Activated B cell treated with CpG ODN at 0.5 μM for 24 hours (primary cell): ENCODE measurements at regions of chr13 and their contacts with region 1.

Region 1: DNA sequence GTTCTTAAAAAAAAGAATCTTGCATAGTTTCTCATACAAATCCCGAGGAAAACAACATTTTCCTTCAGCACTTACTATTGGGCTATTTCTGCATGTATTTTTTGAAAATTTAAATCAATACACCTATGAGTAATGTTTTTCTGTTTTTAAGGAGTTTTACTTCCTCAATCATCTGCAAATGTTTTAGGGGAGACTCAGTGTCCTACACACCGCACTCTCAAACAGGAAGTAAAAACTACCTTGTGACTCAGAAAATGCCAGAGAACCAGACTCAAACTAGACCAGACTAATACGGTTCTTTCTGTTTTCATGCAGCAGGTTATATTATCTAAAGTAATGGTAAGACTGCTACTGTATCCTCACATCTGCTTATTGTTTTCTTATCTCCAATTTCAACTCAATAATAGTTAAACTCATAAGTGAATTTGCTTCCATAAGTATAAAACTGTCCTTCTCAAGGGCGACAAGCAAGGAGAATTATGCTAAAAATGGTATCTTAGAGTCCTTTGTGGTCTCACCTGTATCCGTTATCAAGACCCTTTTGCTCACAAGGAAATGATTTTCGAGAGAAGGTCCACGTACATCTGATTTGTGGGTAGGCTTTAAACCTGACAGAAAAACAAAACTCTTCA is 52.5 kb downstream of the FLT3 start:
- DNase-seq: no peak
- ATAC-seq: peak; percentile 92
- H3K4me3 Mint-ChIP-seq: peak overlapping the region; percentile 72
- H3K27ac Mint-ChIP-seq: peak overlapping the region; percentile 93
- H3K4me1 Mint-ChIP-seq: peaks cover 69% of the 10 kb centered on the region
- H3K27me3 Mint-ChIP-seq: no peaks in the 10 kb centered on the region
- CTCF ChIP-seq: no peak

Region 2: DNA sequence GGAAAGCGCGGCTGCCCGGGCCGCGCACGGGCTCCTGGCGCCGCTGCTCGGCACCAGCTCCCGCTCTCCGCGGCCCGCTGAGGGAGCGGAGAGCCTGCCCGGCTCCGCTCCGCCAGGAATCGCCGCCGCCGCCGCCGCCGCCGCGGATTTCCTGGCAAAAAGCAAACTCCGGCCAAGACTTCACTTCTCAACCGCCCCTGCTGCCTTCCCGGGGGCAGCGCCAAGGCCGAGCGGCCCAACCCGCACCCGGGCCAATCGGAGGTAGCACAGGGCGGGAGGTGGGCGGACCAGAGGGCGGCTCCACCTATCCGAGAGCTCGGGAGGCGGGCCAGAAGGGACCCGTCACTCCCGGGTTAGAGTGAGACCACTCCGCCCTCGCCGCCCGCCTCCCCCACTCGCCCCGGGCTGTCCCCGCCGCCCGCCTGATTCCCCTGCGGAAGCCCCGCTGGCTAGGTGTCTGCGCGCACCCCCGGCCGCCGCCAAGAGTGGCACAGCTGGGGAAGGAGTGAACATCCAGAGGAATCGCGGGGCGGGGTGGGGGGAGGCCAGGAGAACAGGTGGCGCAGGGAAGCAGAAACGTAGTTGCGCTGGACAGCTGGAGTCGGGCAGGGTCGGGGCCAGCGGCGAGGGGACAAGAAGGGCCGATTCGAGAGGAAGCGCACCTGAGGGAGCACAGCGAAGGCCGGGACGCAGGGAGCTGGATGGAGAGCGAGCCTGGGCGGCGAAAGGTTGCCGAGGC is 427.3 kb before region 1 on chr13 and contains the start of gene LNX2:
- CTCF ChIA-PET with region 1: no interaction called
- POLR2A ChIA-PET with region 1: no interaction called
- intact Hi-C with region 1: loop called (anchors 2 kb)
- DNase-seq: peak; percentile 97
- ATAC-seq: peak; percentile 87
- H3K4me3 Mint-ChIP-seq: peak within 1 kb of the TSS; percentile 93
- H3K27ac Mint-ChIP-seq: peak within 1 kb of the TSS; percentile 93
- H3K4me1 Mint-ChIP-seq: peaks cover 54% of the 10 kb centered on the region
- H3K27me3 Mint-ChIP-seq: no peaks in the 10 kb centered on the region
- CTCF ChIP-seq: no peak
- total RNA-seq, gene LNX2: 6.1 and 7.1 TPM in 2 replicates

Region 3: DNA sequence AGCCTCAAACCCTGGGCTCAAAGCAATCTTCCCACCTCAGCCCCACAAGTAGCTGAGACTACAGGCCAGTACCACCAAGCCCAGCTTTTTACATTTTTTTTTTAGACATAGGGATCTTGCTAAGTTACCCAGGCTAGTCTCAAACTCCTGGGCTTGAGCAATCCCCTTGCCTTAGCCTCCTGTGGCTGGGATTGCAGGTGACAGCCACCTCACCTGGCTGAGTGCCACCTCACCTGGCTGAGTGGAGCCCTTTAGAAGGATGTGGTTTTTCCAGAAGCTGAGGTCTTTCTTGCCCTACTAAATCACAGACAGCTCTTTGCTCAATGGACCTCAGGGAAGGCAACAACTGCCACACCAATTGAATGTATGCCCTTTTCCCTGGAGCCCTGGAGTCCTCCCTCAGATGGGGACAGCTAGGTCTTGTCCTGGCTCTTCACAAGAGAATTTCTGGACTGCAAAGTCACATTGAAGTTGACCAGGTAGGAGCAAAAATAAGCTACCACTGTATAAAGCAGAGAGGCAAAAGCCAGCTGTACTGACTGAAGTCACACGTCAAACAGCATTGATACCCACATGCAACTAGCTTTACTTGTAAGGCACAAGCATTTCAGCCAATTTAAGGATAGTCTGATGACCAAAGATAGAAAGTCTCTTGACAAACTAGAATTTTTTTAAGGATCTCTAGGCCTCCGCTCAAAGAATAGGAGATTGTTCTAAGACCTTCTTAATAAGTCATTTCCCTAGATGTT is 114.1 kb before region 1 on chr13:
- CTCF ChIA-PET with region 1: no interaction called
- POLR2A ChIA-PET with region 1: no interaction called
- intact Hi-C with region 1: no loop called
- DNase-seq: no peak
- ATAC-seq: no peak
- H3K4me3 Mint-ChIP-seq: no peak overlapping the region
- H3K27ac Mint-ChIP-seq: no peak overlapping the region
- H3K4me1 Mint-ChIP-seq: no peaks in the 10 kb centered on the region
- H3K27me3 Mint-ChIP-seq: peaks cover 33% of the 10 kb centered on the region
- CTCF ChIP-seq: no peak

Region 4: DNA sequence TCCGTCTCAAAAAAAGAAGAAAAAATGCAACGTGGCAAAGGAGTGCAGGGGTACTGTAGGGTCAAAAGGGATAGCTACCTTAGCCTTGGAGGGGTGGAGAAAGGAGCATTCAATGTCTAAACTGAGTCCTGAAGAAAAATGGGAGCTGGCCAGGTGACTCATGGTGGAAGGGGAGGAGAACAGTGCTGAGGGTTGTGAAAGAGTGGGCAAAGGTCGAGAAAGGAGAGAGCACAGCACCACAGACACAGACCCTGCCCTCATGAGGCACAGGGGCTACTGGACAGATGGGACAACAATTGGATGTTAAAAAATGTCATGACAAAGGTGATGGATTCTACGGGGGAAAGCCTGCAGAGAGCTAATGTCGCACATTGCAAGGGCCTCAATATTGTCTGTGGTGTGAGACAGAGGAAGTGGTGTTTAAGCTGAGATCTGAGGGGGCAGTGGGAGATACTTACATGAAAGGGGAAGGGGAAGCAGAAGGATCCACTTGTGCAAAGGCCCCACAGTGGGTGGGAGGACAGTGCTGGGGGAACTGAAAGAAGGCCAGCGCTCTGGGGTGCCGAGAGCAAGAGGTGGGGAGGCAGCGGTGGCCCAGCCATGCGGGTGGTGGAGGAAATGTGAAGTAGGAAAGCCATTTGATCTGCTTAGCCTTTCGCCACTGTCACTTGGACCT is 16.5 kb before region 1 on chr13:
- CTCF ChIA-PET with region 1: no interaction called
- POLR2A ChIA-PET with region 1: no interaction called
- intact Hi-C with region 1: loop called (anchors 1 kb)
- DNase-seq: no peak
- ATAC-seq: peak; percentile 79
- H3K4me3 Mint-ChIP-seq: no peak overlapping the region
- H3K27ac Mint-ChIP-seq: peak overlapping the region; percentile 78
- H3K4me1 Mint-ChIP-seq: peaks cover 59% of the 10 kb centered on the region
- H3K27me3 Mint-ChIP-seq: no peaks in the 10 kb centered on the region
- CTCF ChIP-seq: no peak

Region 5: GRCh38 chr13:28077231-28077630 is 29.4 kb after region 1 on chr13:
- CTCF ChIA-PET with region 1: no interaction called
- POLR2A ChIA-PET with region 1: no interaction called
- intact Hi-C with region 1: no loop called
- DNase-seq: no peak
- ATAC-seq: no peak
- H3K4me3 Mint-ChIP-seq: no peak overlapping the region
- H3K27ac Mint-ChIP-seq: no peak overlapping the region
- H3K4me1 Mint-ChIP-seq: peaks cover 1% of the 10 kb centered on the region
- H3K27me3 Mint-ChIP-seq: no peaks in the 10 kb centered on the region
- CTCF ChIP-seq: no peak

Region 6: DNA sequence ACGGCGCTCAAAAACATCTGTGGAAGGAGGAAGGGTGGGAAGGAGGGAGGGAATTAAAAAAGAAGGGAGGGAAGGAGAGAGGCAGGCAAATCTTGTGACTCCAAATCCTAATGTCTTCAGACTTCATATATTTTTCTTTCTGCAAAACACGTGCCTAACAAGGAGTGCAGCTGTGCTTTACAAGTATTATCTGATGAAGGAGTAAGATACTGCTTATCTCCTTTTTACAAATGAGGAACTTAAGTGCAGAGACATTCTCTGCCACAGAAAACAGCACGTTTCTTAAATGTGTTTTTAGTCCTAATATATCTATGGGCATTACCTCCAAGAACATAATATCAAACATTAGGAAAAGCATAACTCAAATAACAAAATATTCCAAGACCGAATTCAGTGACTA is 46.0 kb after region 1 on chr13:
- CTCF ChIA-PET with region 1: no interaction called
- POLR2A ChIA-PET with region 1: no interaction called
- intact Hi-C with region 1: no loop called
- DNase-seq: no peak
- ATAC-seq: no peak
- H3K4me3 Mint-ChIP-seq: no peak overlapping the region
- H3K27ac Mint-ChIP-seq: no peak overlapping the region
- H3K4me1 Mint-ChIP-seq: peaks cover 9% of the 10 kb centered on the region
- H3K27me3 Mint-ChIP-seq: peaks cover 16% of the 10 kb centered on the region
- CTCF ChIP-seq: no peak

Region 7: DNA sequence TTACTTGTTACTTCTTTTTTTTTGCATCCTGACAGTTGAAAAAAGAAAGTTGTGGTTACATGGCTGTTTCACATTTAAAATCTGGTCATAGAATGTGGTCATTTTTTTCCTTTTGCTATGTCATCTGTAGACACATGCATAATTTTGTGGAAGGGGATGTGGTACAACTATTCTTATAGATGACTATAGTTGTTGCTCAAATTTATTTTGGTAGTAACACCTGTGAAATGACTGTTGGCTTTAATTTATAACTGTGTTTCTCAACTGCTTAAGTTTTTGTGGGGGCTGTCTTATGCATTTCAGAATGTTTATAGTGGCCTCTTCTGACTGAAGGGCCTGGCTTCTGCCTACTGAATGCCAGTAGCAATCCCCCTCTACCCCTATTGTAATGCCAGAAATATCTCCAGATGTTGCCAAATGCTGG is 220.9 kb after region 1 on chr13:
- CTCF ChIA-PET with region 1: no interaction called
- POLR2A ChIA-PET with region 1: no interaction called
- intact Hi-C with region 1: loop called (anchors 5 kb)
- DNase-seq: no peak
- ATAC-seq: peak; percentile 87
- H3K4me3 Mint-ChIP-seq: peak overlapping the region; percentile 41
- H3K27ac Mint-ChIP-seq: peak overlapping the region; percentile 78
- H3K4me1 Mint-ChIP-seq: peaks cover 29% of the 10 kb centered on the region
- H3K27me3 Mint-ChIP-seq: no peaks in the 10 kb centered on the region
- CTCF ChIP-seq: no peak

Region 8: GRCh38 chr13:28531077-28531844 is 483.4 kb after region 1 on chr13:
- CTCF ChIA-PET with region 1: no interaction called
- POLR2A ChIA-PET with region 1: no interaction called
- intact Hi-C with region 1: loop called (anchors 10 kb)
- DNase-seq: no peak
- ATAC-seq: no peak
- H3K4me3 Mint-ChIP-seq: no peak overlapping the region
- H3K27ac Mint-ChIP-seq: no peak overlapping the region
- H3K4me1 Mint-ChIP-seq: peaks cover 30% of the 10 kb centered on the region
- H3K27me3 Mint-ChIP-seq: peaks cover 32% of the 10 kb centered on the region
- CTCF ChIP-seq: no peak

Region 9: DNA sequence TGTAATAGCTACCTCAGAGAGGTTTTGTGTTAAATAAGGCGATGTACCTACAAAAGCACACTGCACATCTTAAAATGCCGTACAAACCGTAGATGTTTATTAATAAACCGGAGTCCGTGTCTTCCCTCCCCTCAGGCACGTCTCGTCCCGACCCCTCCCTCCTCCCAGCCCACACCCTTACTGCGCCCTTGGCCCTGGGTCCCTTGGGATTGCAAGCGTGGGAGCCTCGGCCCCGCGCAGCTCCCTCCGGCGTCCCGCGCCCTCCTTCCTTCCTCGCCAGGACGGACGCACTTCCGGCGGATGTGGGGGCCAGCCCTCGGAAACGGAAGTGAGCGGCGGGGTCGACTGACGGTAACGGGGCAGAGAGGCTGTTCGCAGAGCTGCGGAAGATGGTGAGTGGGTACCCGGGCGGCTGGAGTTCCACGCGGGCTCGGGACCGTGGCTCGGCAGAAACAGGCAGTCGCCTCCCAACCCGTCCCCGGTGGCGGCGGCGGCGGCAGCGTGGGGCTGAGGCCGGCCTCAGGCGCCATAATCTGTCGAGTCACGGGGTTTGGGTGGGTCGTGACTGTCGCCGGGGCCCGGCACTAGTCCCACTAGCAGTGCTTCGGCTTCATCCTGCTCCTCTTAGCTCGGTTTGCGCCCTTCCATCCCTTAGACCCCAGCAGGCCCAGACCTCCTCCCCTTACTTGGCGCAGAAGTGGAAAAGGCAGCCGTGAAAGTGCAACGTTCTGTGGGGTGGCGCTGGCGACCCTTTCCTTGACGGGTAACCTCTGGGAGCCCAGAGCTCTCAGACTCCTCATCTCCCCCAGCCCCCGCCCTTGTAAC is 611.1 kb after region 1 on chr13 and contains the start of gene POMP:
- CTCF ChIA-PET with region 1: no interaction called
- POLR2A ChIA-PET with region 1: no interaction called
- intact Hi-C with region 1: loop called (anchors 5 kb)
- DNase-seq: peak; percentile 96
- ATAC-seq: peak; percentile 92
- H3K4me3 Mint-ChIP-seq: peak within 1 kb of the TSS; percentile 98
- H3K27ac Mint-ChIP-seq: peak within 1 kb of the TSS; percentile 93
- H3K4me1 Mint-ChIP-seq: peaks cover 62% of the 10 kb centered on the region
- H3K27me3 Mint-ChIP-seq: no peaks in the 10 kb centered on the region
- CTCF ChIP-seq: no peak
- total RNA-seq, gene POMP: 54.0 and 56.0 TPM in 2 replicates

Region 10: DNA sequence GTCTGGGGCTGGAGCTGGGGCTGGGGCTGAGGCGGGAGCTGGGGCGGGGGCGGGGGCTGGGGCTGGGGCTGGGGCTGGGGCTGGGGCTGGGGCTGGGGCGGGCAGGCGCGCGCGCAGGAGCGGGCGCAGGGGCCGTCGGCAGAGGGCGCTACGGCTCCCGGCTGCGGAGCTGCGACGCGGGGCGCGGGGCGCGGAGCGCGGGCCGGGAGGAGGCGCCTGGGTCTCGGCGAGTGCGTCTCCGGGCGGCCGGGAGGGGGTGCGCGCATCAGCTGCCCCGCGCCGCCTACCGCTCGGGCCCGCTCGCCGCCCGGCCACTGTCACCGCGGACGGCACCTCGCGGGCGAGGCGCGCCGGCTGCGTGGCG is 771.8 kb after region 1 on chr13:
- CTCF ChIA-PET with region 1: no interaction called
- POLR2A ChIA-PET with region 1: no interaction called
- intact Hi-C with region 1: no loop called
- DNase-seq: peak; percentile 26
- ATAC-seq: peak; percentile 75
- H3K4me3 Mint-ChIP-seq: no peak overlapping the region
- H3K27ac Mint-ChIP-seq: no peak overlapping the region
- H3K4me1 Mint-ChIP-seq: peaks cover 11% of the 10 kb centered on the region
- H3K27me3 Mint-ChIP-seq: peaks cover 57% of the 10 kb centered on the region
- CTCF ChIP-seq: no peak